MCF 10A (cell line): ENCODE measurements at regions of chr7 and their contacts with region 1.

Region 1: DNA sequence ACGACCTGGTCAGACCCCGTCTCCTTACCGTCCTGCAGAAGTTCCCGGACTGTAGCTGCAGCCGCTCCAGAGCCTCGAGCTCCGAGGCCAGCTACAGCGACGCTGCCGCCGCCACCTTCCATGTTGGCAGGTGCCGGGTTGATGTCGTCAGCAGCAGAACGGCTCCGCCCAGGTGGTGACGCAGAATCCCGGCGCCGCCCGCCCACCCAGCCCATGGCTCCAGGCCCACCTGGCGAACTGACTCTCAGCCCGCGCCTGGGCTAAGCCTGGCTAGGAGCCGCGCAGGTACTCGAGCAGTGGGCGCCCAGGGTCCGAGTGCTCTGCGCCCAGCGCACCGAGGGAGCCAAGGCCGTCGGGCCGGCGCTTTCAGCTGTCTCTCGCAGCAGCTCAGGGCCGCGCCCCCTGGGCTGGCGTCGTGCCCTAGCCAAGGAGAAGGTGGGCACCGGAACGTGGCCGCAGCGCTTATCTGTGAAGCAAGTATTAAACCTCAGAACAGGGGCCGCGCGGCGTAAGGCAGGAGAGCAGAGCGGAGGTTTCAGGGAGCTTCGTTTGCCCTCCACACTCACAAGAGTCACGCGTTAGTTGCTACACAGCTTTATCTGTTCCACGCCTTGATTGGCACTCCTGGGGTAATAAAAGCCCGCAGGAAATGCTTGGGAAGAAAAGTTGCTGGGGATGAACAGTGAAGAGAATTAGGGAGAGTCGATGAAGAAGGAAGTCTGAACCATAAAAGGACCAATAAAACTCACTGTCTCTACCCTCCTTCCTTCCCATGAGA is at the starts of genes COG5 and DUS4L:
- DNase-seq: peak; percentile 80
- H3K4me3 Mint-ChIP-seq: peak within 1 kb of the TSS; percentile 75
- H3K27ac Mint-ChIP-seq: peak within 1 kb of the TSS; percentile 79
- H3K4me1 Mint-ChIP-seq: peaks cover 42% of the 10 kb centered on the region
- H3K27me3 Mint-ChIP-seq: no peaks in the 10 kb centered on the region
- CTCF ChIP-seq: no peak
- total RNA-seq, gene COG5: 40.3 and 40.9 TPM in 2 replicates
- total RNA-seq, gene DUS4L: 14.5 and 16.3 TPM in 2 replicates

Region 2: GRCh38 chr7:107579885-107580715 is 16.1 kb after region 1 on chr7 and contains the start of gene BCAP29:
- CTCF ChIA-PET with region 1: interaction called, 3 read pairs
- POLR2A ChIA-PET with region 1: interaction called, 47 read pairs
- intact Hi-C with region 1: no loop called
- DNase-seq: peak; percentile 71
- H3K4me3 Mint-ChIP-seq: peak within 1 kb of the TSS; percentile 87
- H3K27ac Mint-ChIP-seq: peak within 1 kb of the TSS; percentile 75
- H3K4me1 Mint-ChIP-seq: peaks cover 20% of the 10 kb centered on the region
- H3K27me3 Mint-ChIP-seq: no peaks in the 10 kb centered on the region
- CTCF ChIP-seq: no peak
- total RNA-seq, gene BCAP29: 61.5 and 73.4 TPM in 2 replicates